ENCODE measurements at regions of chr13 and their contacts with region 1.

Region 1: DNA sequence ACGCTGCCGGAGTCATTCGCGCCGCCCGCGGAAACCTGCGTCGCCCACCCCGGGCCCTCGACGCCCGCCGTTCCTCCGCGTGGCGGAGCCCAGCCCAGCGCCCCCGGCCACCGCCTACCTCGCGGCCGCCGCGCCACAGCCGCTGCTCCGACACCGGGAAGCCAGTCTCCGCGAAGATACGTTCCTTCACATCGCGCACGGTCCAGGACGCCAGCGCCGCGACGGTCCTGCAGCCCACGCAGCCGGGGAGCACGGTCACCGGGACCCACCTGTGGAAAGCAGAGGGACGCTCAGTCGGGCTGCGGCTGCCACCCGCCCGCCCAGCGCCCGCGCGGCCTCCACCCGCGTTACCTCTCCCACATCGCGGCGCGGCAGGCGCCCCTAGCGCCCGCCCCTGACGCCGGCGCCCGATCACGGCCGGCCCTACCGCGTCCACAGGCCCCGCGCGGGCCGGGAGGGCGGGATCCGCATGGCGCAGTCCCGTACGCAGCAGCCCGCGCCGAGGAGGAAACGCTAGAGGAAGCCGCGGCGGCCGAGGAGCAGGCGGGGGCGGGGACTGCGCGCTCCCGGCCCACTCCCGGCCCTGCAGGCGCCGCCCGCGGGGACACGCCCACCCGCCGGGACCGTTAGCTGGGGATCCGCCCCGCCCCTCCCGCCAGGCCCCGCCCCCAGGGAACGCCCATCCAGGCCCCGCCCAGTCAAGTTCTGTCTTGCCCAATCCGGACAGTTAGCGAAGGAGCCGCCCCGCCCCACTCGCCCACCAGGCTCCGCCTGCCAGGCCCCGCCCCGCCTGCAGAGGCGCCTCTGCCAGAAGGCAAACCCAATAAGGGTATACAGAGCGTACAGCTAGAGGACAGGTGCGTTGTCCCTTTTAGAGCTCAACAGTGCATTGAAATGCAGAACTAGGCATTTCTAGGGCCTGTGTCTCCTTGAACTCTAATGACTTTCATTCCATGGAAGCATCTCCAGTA is 58.2 kb downstream of the SACS start:
- DNase-seq: peak; percentile 90 to 98
- H3K4me3 ChIP-seq: peak overlapping the region; percentile 90 to 92
- H3K27ac ChIP-seq: peak overlapping the region; percentile 91 to 92
- H3K4me1 ChIP-seq: peaks cover 12 to 20% of the 10 kb centered on the region in 2 donors
- H3K27me3 ChIP-seq: no peaks in the 10 kb centered on the region
- CTCF ChIP-seq: peak in 2 of 3 experiments; percentile 14 to 43

Region 2: GRCh38 chr13:21458813-21459701 is 1916.2 kb before region 1 on chr13 and contains the start of gene ZDHHC20:
- intact Hi-C with region 1: loop called (anchors 10 kb)
- DNase-seq: peak; percentile 59 to 94
- H3K4me3 ChIP-seq: peak within 1 kb of the TSS; percentile 88 to 93
- H3K27ac ChIP-seq: peak within 1 kb of the TSS; percentile 90 to 95
- H3K4me1 ChIP-seq: no peaks in the 10 kb centered on the region
- H3K27me3 ChIP-seq: no peaks in the 10 kb centered on the region
- CTCF ChIP-seq: no peak
- total RNA-seq, gene ZDHHC20: 39.8 TPM

Region 3: DNA sequence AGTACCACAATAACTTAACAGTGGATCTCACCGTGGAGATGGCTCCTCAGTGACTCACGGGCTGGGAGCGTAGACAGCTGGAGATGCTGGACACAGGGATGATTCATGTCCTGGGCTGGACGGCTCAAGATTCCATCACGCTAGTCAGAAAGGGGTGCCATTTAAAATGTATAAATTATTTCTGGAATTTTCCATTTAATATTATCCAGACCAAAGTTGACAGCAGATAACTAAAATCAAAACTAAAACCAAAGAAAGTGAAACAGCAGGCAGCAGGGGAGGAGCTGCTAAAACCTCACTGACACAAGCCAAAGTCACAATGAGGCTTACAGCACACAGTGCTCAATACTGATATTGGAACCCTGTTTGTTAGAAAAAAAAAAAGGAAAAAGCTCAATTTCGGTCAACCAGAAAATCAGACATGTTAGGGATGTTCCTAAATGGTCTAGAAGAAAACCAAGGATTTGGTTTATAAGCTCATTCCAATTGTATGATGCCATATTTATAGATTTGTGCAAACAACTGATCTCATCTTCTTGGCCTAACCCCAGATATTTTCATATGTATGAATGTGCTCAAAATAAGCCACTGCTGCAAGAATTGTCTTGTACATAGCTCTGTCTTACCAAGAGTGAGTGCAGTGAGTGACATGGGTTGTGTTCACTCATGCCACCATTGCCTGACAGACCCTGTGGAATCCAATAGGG is 53.6 kb before region 1 on chr13:
- intact Hi-C with region 1: loop called (anchors 1 kb)
- DNase-seq: peak in 1 of 2 donors; percentile 92
- H3K4me3 ChIP-seq: peak overlapping the region; percentile 31 to 42
- H3K27ac ChIP-seq: peak overlapping the region; percentile 63 to 86
- H3K4me1 ChIP-seq: peaks cover 0 to 11% of the 10 kb centered on the region in 2 donors
- H3K27me3 ChIP-seq: no peaks in the 10 kb centered on the region
- CTCF ChIP-seq: no peak

Region 4: DNA sequence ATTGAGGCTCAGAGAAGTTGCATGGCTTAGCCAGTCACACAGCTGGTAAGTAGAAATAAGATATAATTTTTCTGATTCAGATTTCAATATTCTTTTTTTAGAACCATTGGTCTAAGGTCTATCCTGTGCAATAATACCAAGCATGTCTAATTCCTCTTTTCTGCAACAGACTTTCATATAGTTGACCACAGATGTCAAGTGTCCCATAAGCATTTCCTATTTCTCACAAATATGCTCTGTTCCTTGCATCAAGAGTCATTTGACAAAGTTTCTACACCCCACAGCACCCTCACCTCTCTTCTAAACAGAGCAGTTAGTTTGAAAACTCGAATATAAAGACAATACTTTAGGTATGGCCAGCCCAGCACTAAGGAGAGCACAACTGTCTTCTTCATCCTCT is 85.0 kb after region 1 on chr13:
- intact Hi-C with region 1: loop called (anchors 2 kb)
- DNase-seq: no peak
- H3K4me3 ChIP-seq: no peak overlapping the region
- H3K27ac ChIP-seq: no peak overlapping the region
- H3K4me1 ChIP-seq: peaks cover 0 to 5% of the 10 kb centered on the region in 2 donors
- H3K27me3 ChIP-seq: no peaks in the 10 kb centered on the region
- CTCF ChIP-seq: no peak

Region 5: DNA sequence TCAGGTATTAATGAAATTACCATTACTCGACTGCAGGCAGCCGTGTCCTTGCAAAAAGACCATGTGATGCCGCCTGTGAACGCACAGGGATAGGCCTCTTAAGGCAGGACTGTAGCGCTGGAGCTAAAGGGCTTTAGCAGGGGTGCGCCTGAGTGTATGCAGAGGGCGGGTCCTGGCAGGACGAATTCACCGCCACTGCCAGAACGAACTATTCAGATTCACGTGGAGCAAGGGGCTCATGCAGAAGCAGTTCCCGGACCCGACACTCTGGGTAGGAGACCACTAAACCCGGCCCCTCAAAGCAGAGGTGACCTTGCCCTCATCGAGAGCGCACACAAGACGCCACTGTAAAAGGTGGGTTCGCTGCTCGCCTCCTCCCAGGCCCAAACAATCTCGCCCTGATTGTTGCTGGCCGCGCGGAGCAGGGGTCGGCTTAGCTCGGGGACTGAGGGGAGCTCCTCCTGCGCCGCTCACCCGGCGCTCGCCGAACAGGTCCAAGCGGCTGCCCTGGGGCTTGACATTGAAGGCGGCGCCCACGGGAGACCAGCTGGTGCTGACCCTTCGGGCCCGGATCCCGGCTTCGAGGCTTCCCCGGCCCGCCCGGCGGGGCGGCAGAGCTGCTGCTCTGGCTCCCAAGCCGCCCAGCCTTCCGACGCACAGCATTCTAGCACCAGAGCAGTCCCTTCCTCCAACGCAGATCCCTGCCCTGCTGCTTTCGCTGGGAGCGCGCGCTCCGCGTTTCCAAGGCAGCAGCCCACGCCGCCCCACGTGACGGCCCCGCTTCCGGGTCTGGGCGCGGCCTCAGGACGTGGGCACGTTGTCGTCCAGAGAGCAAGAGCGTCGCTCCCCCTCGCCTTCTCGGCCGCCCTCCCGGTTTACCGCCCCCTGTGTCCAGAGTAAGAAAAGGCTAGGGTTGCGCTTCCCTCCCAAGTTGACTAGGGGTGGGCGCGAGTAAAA is 513.6 kb after region 1 on chr13 and contains the start of gene MIPEP:
- intact Hi-C with region 1: loop called (anchors 2 kb)
- DNase-seq: peak; percentile 58 to 94
- H3K4me3 ChIP-seq: peak within 1 kb of the TSS; percentile 93 to 98
- H3K27ac ChIP-seq: peak within 1 kb of the TSS; percentile 83 to 89
- H3K4me1 ChIP-seq: peaks cover 0 to 7% of the 10 kb centered on the region in 2 donors
- H3K27me3 ChIP-seq: no peaks in the 10 kb centered on the region
- CTCF ChIP-seq: peak; percentile 48 to 82 (median 77)
- total RNA-seq, gene MIPEP: 2.8 TPM

Region 6: GRCh38 chr13:24053519-24054251 is 678.4 kb after region 1 on chr13:
- intact Hi-C with region 1: loop called (anchors 10 kb)
- DNase-seq: no peak
- H3K4me3 ChIP-seq: peak overlapping the region in 1 of 2 donors; percentile 49
- H3K27ac ChIP-seq: peak overlapping the region; percentile 58 to 69
- H3K4me1 ChIP-seq: peaks cover 0 to 20% of the 10 kb centered on the region in 2 donors
- H3K27me3 ChIP-seq: no peaks in the 10 kb centered on the region
- CTCF ChIP-seq: peak; percentile 45 to 60 (median 51)

Measured in ascending aorta (tissue), 2 donors.